ENCODE measurements at regions of chr11 and their contacts with region 1.

Region 1: DNA sequence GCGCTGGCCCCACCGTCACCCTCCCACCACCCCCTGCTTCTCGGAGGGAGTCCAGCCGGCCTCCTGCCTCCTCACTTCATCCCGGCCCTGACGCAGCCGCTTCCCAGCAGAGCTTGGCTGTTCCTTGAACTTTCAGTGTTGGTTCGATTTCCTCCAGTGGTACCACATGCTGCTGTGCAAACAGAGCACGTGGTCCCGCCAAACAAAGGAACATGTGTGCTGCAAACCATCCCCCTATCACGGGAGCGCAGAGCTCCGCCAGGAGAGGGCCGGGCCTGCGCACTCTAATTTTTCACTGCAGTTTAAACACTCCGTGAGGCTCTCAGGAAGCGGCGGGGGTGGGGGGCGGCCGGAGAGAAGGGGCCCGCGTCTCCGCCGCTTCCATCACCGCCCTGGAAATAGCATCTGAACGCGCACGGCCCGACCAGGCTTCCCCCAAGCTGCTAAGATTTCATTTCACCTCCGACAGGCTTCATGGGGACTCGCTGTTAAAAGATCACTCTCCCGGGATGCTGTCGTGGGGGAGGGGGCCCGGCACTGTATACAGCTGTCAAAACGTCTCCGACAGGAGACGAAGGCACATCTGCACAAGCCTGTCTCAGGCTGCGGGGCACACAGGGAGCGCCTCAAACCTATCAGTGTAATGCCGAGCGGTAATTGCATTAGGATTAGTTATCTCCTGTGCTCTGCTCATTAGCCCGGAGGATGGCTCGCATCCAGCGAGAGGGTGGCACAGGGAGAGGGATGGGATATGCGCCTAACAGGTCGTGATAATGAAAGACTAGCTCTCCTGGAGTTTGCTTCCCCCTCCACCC is 269.9 kb upstream of the SORL1-AS1 start:
- DNase-seq: peak; percentile 90 to 94 (median 93)
- H3K4me3 ChIP-seq: peak overlapping the region; percentile 40
- H3K27ac ChIP-seq: peak overlapping the region; percentile 69 to 97
- H3K4me1 ChIP-seq: peaks cover 2% of the 10 kb centered on the region
- H3K27me3 ChIP-seq: no peaks in the 10 kb centered on the region
- CTCF ChIP-seq: peak in 2 of 3 donors; percentile 24 to 35
- EP300 ChIP-seq: peak; percentile 79
- POLR2A ChIP-seq: peak; percentile 75

Region 2: DNA sequence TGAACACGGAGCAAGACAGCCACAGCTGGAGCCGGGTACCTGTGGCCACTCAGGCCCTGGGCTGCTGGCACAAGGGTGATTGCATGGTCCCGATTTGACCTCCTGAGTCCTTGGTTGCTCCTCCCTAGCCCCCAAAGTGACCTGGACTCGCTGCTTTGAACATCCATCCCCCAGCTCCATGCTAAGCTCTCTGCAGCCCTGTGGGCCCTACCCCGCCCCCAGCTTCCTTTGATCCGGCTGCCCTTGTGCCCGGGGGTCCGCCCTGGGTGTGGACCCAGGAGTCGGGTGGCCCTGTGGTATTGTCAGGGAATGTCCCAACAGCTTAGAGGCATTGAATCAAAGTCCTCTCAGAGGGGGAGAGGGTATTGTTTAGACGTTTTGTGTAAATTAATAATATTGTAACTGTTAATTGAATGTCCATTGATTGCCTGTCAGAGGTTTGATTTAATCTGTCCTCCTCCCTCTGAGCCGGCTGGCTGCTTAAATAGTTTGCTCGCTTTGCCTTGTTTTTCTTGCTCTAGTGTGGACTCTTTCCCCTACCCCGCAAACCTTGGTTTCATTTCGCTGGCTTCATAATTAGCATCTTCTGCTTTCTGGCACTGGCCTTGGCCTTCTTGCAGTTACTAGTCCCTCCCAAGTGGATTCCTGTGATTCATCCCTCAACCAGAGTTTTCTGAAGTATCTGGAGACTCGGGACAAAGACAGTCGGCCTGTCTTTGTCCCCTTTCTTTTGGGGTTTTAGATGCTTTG is 1190.4 kb before region 1 on chr11:
- intact Hi-C with region 1: no loop called
- DNase-seq: peak in 3 of 5 donors; percentile 48 to 68 (median 55)
- H3K4me3 ChIP-seq: no peak overlapping the region
- H3K27ac ChIP-seq: peak overlapping the region in 1 of 2 donors; percentile 53
- H3K4me1 ChIP-seq: peaks cover 8% of the 10 kb centered on the region
- H3K27me3 ChIP-seq: no peaks in the 10 kb centered on the region
- CTCF ChIP-seq: no peak
- EP300 ChIP-seq: no peak
- POLR2A ChIP-seq: no peak

Region 3: GRCh38 chr11:121741761-121742361 is 19.2 kb after region 1 on chr11:
- intact Hi-C with region 1: loop called in 1 of 4 experiments (anchors 2 kb)
- DNase-seq: peak; percentile 77 to 89 (median 88)
- H3K4me3 ChIP-seq: peak overlapping the region; percentile 12
- H3K27ac ChIP-seq: peak overlapping the region; percentile 24 to 86
- H3K4me1 ChIP-seq: peaks cover 7% of the 10 kb centered on the region
- H3K27me3 ChIP-seq: no peaks in the 10 kb centered on the region
- CTCF ChIP-seq: no peak
- EP300 ChIP-seq: peak; percentile 86
- POLR2A ChIP-seq: peak; percentile 34

Region 4: GRCh38 chr11:121780971-121781370 is 58.3 kb after region 1 on chr11:
- intact Hi-C with region 1: no loop called
- DNase-seq: peak; percentile 46 to 71 (median 68)
- H3K4me3 ChIP-seq: no peak overlapping the region
- H3K27ac ChIP-seq: no peak overlapping the region
- H3K4me1 ChIP-seq: no peaks in the 10 kb centered on the region
- H3K27me3 ChIP-seq: no peaks in the 10 kb centered on the region
- CTCF ChIP-seq: no peak
- EP300 ChIP-seq: no peak
- POLR2A ChIP-seq: no peak

Region 5: GRCh38 chr11:122108192-122108799 is 385.7 kb after region 1 on chr11:
- intact Hi-C with region 1: loop called in 2 of 4 experiments (anchors 5 to 10 kb)
- DNase-seq: peak in 1 of 5 donors; percentile 55
- H3K4me3 ChIP-seq: no peak overlapping the region
- H3K27ac ChIP-seq: no peak overlapping the region
- H3K4me1 ChIP-seq: peaks cover 1% of the 10 kb centered on the region
- H3K27me3 ChIP-seq: no peaks in the 10 kb centered on the region
- CTCF ChIP-seq: peak; percentile 11 to 41 (median 32)
- EP300 ChIP-seq: no peak
- POLR2A ChIP-seq: no peak

Measured in ovary (tissue), 10 donors.